AG04450 (cell line): ENCODE measurements at regions of chr13 and their contacts with region 1.

Region 1: GRCh38 chr13:21297914-21298831 is 121.7 kb downstream of the MRPL57 start:
- DNase-seq: peak; percentile 69
- H3K4me3 ChIP-seq: peak overlapping the region; percentile 87
- H3K27ac ChIP-seq: no peak overlapping the region
- H3K27me3 ChIP-seq: no peaks in the 10 kb centered on the region
- CTCF ChIP-seq: peak; percentile 91

Region 2: GRCh38 chr13:20703780-20704445 is 594.3 kb before region 1 on chr13:
- CTCF ChIA-PET with region 1: no interaction called
- POLR2A ChIA-PET with region 1: no interaction called
- DNase-seq: peak; percentile 45
- H3K4me3 ChIP-seq: peak overlapping the region; percentile 75
- H3K27ac ChIP-seq: no peak overlapping the region
- H3K27me3 ChIP-seq: no peaks in the 10 kb centered on the region
- CTCF ChIP-seq: peak; percentile 56

Region 3: GRCh38 chr13:21287331-21287907 is 10.8 kb before region 1 on chr13:
- CTCF ChIA-PET with region 1: interaction called, 13 read pairs
- POLR2A ChIA-PET with region 1: no interaction called
- DNase-seq: no peak
- H3K4me3 ChIP-seq: no peak overlapping the region
- H3K27ac ChIP-seq: no peak overlapping the region
- H3K27me3 ChIP-seq: no peaks in the 10 kb centered on the region
- CTCF ChIP-seq: no peak